Calu3 (cell line): ENCODE measurements at regions of chr3 and their contacts with region 1.

Region 1: DNA sequence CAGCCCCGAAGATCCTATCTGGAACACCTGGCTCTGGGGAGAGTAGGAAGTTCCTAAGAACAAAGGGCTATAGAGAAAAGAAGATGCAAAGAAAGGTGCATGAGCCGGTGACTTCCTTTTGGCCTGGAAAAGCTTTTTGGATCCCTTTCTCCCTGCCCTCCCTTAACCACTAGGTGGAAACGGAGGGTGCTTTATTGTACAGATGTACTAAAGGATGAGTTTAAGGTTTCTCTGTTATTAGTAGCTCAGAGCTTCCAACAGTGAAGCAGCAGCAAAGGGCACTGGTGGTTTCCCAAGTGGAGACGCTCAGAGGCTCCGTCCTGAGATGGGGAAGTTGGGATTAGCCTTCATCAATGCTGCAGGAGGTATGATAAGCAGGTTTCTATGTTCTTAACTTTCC is 5.9 kb upstream of the ADGRG7 start:
- DNase-seq: peak; percentile 38
- H3K4me3 Mint-ChIP-seq: peak overlapping the region; percentile 49
- H3K27ac Mint-ChIP-seq: peak overlapping the region; percentile 60
- H3K4me1 Mint-ChIP-seq: peaks cover 62% of the 10 kb centered on the region
- H3K27me3 Mint-ChIP-seq: no peaks in the 10 kb centered on the region
- CTCF ChIP-seq: peak; percentile 38

Region 2: DNA sequence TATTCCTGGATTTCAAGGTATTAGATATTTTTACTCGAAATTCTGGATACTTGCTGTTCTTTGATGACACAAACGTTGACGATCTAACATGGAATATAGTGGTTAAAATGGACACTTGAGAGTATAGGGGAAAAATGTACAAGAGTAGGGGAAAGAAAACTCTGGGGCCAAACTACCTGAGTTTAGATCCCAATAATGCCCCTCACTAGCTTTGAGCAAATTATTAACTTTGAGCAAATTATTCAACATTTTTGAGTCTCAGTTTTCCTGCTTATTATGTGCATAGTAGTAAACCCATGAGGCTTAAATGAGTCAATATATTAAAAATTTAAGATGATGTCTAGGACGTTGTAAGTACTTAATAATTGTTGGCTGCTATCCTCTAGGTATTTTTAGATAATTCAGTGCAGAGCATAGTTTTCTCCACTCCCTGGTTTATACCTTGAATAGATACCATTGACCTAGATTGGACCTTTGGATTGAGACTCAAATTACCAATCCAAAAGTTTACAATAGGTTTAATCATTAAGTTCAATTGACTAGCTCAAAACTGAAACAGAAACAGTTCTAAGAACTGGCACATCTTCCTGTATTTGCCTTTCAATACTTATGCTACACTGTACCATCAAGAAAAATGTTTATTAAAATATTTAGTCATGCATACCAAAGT is 10.4 kb after region 1 on chr3:
- CTCF ChIA-PET with region 1: interaction called, 19 read pairs
- intact Hi-C with region 1: no loop called
- DNase-seq: no peak
- H3K4me3 Mint-ChIP-seq: no peak overlapping the region
- H3K27ac Mint-ChIP-seq: peak overlapping the region; percentile 88
- H3K4me1 Mint-ChIP-seq: peaks cover 32% of the 10 kb centered on the region
- H3K27me3 Mint-ChIP-seq: no peaks in the 10 kb centered on the region
- CTCF ChIP-seq: no peak

Region 3: GRCh38 chr3:100634493-100635272 is 31.2 kb after region 1 on chr3:
- CTCF ChIA-PET with region 1: interaction called, 33 read pairs
- intact Hi-C with region 1: loop called (anchors 2 kb)
- DNase-seq: peak; percentile 83
- H3K4me3 Mint-ChIP-seq: peak overlapping the region; percentile 48
- H3K27ac Mint-ChIP-seq: peak overlapping the region; percentile 88
- H3K4me1 Mint-ChIP-seq: peaks cover 39% of the 10 kb centered on the region
- H3K27me3 Mint-ChIP-seq: no peaks in the 10 kb centered on the region
- CTCF ChIP-seq: no peak

Region 4: DNA sequence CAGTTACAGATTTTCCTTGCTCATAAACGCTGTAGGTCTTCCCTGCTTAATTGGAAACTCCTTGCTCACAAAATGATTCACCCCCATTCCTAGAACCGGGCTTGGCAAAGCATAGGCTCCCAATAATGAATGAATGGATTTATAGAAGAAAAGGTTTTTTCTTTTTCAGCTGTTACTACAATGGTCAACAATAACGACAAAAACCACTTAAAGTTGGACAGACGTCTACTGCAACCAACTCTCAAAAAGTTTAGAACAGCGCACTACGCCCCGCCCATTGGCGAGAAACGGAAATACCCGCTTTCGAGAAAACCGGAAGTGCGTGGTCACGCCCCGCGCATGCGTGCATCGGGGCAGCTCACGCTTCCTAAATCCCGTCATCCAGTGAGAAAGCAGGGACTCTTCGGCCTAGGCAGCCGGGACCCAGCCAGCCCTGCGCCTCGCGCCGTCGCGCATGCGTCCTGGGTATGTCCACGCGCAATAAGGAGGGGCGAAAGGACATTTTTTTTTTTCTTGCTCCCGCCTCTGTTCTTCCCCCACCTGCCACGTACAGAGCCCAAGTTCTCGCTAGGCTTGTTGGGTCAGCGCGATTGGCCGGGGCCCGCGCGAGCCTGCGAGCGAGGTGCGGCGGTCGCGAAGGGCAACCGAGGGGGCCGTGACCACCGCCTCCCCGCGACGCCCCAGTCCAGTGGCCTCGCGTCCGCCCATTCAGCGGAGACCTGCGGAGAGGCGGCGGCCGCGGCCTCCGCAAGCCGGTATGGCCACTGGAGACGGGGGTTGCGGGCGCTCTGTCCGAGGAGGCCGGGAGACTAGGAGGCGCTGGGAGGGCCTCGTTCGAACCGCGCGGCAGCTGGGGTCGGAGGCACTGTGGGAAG is 105.7 kb after region 1 on chr3 and contains the start of gene TFG:
- CTCF ChIA-PET with region 1: interaction called, 13 read pairs
- intact Hi-C with region 1: loop called (anchors 2 kb)
- DNase-seq: peak; percentile 98
- H3K4me3 Mint-ChIP-seq: peak within 1 kb of the TSS; percentile 80
- H3K27ac Mint-ChIP-seq: peak within 1 kb of the TSS; percentile 94
- H3K4me1 Mint-ChIP-seq: peaks cover 41% of the 10 kb centered on the region
- H3K27me3 Mint-ChIP-seq: no peaks in the 10 kb centered on the region
- CTCF ChIP-seq: no peak
- total RNA-seq, gene TFG: 139 and 143 TPM in 2 replicates